CD4-positive, alpha-beta memory T cell (primary cell): ENCODE measurements at regions of chr2 and their contacts with region 1.

Region 1: GRCh38 chr2:84925724-84926376 is 20.4 kb downstream of the TMSB10 start:
- DNase-seq: peak; percentile 96 to 97 (median 97)
- H3K4me3 ChIP-seq: peak overlapping the region; percentile 73 to 86
- H3K4me3 Mint-ChIP-seq: peak overlapping the region; percentile 90 to 99 (median 95)
- H3K27ac ChIP-seq: peak overlapping the region; percentile 62
- H3K27ac Mint-ChIP-seq: peak overlapping the region; percentile 91 to 99 (median 95)
- H3K4me1 ChIP-seq: peaks cover 40% of the 10 kb centered on the region
- H3K4me1 Mint-ChIP-seq: peaks cover 25 to 48% (median 36%) of the 10 kb centered on the region in 4 donors
- H3K27me3 ChIP-seq: no peaks in the 10 kb centered on the region
- H3K27me3 Mint-ChIP-seq: no peaks in the 10 kb centered on the region

Region 2: DNA sequence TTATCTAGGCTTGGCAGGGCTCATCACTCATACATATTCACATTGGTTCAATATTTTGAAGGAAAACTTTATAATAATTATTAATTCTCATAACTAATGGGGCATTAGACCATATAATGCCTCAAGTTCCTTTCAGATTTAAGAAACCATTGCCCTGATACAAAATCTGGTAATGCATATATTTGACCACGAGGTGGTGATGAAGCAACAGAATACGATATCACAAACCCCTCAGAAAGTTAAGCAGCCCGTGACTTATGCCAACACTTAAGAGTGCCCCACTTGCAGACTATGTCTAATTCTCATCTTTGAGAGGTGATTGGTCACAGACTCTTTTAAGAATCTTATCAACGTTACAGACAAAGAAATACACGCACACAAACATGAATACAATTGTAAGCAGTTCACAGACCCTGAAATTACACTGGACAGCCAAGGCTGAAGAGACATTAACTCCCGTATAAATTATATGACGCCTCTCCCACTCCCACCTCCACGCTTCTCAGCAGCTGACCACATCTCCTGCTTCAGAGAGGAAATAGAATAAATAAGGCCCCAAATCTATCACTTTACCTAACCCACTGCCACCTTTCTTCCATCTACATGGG is 430.2 kb before region 1 on chr2:
- CTCF ChIA-PET with region 1: interaction called, 37 read pairs
- POLR2A ChIA-PET with region 1: interaction called, 6 read pairs
- intact Hi-C with region 1: loop called (anchors 1 kb)
- DNase-seq: peak; percentile 63 to 75 (median 71)
- H3K4me3 ChIP-seq: no peak overlapping the region
- H3K4me3 Mint-ChIP-seq: no peak overlapping the region
- H3K27ac ChIP-seq: no peak overlapping the region
- H3K27ac Mint-ChIP-seq: peak overlapping the region in 6 of 7 donors; percentile 39 to 84 (median 60)
- H3K4me1 ChIP-seq: peaks cover 8% of the 10 kb centered on the region
- H3K4me1 Mint-ChIP-seq: peaks cover 6 to 14% (median 7%) of the 10 kb centered on the region in 4 donors
- H3K27me3 ChIP-seq: no peaks in the 10 kb centered on the region
- H3K27me3 Mint-ChIP-seq: no peaks in the 10 kb centered on the region

Region 3: GRCh38 chr2:84781942-84782716 is 143.7 kb before region 1 on chr2:
- CTCF ChIA-PET with region 1: interaction called, 21 read pairs
- POLR2A ChIA-PET with region 1: interaction called, 13 read pairs
- intact Hi-C with region 1: loop called (anchors 2 kb)
- DNase-seq: peak; percentile 59 to 84 (median 71)
- H3K4me3 ChIP-seq: peak overlapping the region; percentile 6 to 23
- H3K4me3 Mint-ChIP-seq: peak overlapping the region; percentile 52 to 84 (median 74)
- H3K27ac ChIP-seq: peak overlapping the region; percentile 53
- H3K27ac Mint-ChIP-seq: peak overlapping the region; percentile 84 to 96 (median 93)
- H3K4me1 ChIP-seq: peaks cover 80% of the 10 kb centered on the region
- H3K4me1 Mint-ChIP-seq: peaks cover 80 to 93% (median 84%) of the 10 kb centered on the region in 4 donors
- H3K27me3 ChIP-seq: no peaks in the 10 kb centered on the region
- H3K27me3 Mint-ChIP-seq: no peaks in the 10 kb centered on the region

Region 4: GRCh38 chr2:84865181-84865783 is 60.6 kb before region 1 on chr2:
- CTCF ChIA-PET with region 1: interaction called, 64 read pairs
- POLR2A ChIA-PET with region 1: interaction called, 14 read pairs
- intact Hi-C with region 1: loop called (anchors 1 kb)
- DNase-seq: peak in 4 of 5 donors; percentile 52 to 64 (median 55)
- H3K4me3 ChIP-seq: no peak overlapping the region
- H3K4me3 Mint-ChIP-seq: peak overlapping the region; percentile 30 to 82 (median 63)
- H3K27ac ChIP-seq: no peak overlapping the region
- H3K27ac Mint-ChIP-seq: peak overlapping the region; percentile 72 to 95 (median 91)
- H3K4me1 ChIP-seq: peaks cover 80% of the 10 kb centered on the region
- H3K4me1 Mint-ChIP-seq: peaks cover 61 to 92% (median 74%) of the 10 kb centered on the region in 4 donors
- H3K27me3 ChIP-seq: no peaks in the 10 kb centered on the region
- H3K27me3 Mint-ChIP-seq: no peaks in the 10 kb centered on the region

Region 5: DNA sequence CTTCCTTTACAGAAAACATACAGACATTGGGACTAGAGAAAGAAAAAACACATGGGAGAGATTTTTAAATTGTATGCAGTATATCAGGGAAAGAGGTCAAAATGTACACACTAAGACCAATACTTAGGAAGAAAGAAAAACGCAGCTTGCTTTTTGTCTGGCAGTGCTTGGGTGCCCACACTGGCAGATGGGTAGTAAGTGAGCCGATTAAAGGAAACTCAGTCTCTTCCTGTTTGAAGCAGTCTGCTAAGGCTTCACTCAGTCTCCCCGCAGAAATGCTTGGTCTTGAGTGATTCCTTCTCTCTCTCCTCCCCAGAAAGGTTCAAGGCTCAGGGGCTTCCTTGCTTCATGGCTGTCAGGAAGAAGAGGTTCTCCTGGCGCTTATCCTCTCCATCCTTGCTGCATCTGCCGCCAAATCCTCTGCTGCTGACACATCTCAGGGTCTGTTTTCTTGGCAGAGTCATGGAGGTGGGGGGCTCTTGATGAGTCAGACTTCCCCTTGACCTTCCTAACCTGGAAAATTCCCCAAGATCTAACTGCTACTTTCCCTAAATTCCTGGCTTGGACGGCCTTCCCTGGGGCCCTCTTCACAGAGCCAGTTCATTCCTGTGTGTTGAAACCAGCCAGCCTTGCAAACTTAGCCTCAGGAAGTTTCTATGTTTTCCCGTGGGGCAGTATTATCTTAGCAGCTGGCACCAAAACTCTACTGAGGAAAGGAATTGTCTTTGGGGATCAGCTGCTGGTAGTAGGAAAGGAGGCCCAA is 30.9 kb before region 1 on chr2:
- CTCF ChIA-PET with region 1: interaction called, 271 read pairs
- POLR2A ChIA-PET with region 1: interaction called, 49 read pairs
- intact Hi-C with region 1: no loop called
- DNase-seq: peak in 2 of 5 donors; percentile 36 to 42
- H3K4me3 ChIP-seq: peak overlapping the region in 1 of 2 donors; percentile 13
- H3K4me3 Mint-ChIP-seq: peak overlapping the region; percentile 51 to 75 (median 69)
- H3K27ac ChIP-seq: peak overlapping the region; percentile 50
- H3K27ac Mint-ChIP-seq: peak overlapping the region; percentile 38 to 95 (median 91)
- H3K4me1 ChIP-seq: peaks cover 61% of the 10 kb centered on the region
- H3K4me1 Mint-ChIP-seq: peaks cover 39 to 62% (median 48%) of the 10 kb centered on the region in 4 donors
- H3K27me3 ChIP-seq: no peaks in the 10 kb centered on the region
- H3K27me3 Mint-ChIP-seq: no peaks in the 10 kb centered on the region

Region 6: DNA sequence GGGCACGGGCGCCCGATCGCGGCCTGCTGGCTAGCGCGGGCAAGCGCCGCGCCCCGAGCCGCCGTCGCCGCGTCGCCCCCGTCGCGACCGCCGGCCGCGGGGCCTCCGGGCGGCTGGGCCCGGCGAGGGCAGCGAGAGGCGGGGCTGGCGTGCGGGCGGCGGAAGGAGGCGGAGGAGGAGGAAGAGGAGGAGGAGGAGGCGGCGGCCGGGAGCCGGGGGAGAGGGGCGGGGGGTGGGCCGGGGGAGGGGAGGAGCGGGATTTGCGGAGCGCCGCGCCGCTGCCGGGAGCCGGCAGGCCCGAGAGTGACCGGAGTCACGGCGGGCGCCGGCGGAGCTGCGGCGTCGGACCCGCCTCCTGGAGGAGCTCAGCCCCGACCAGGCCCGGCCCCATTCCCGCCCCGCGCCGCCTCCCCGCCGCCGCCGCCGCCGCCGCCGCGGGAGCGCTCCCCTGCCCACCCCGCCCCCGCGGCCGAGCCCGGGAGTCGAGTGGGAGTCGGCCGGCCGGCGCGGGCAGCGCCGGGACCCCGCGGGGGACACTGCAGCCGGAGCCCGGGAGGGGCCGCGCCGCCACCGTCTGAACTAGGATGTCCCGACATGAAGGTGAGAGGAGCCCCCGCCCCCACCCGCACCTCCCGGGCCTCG is 45.1 kb after region 1 on chr2 and contains the start of gene KCMF1:
- CTCF ChIA-PET with region 1: interaction called, 25 read pairs
- POLR2A ChIA-PET with region 1: interaction called, 38 read pairs
- intact Hi-C with region 1: loop called (anchors 2 kb)
- DNase-seq: peak; percentile 64 to 79 (median 71)
- H3K4me3 ChIP-seq: peak within 1 kb of the TSS; percentile 63 to 90
- H3K4me3 Mint-ChIP-seq: peak within 1 kb of the TSS; percentile 93 to 100 (median 99)
- H3K27ac ChIP-seq: peak within 1 kb of the TSS; percentile 93
- H3K27ac Mint-ChIP-seq: peak within 1 kb of the TSS; percentile 97 to 100 (median 99)
- H3K4me1 ChIP-seq: peaks cover 59% of the 10 kb centered on the region
- H3K4me1 Mint-ChIP-seq: peaks cover 41 to 73% (median 56%) of the 10 kb centered on the region in 4 donors
- H3K27me3 ChIP-seq: no peaks in the 10 kb centered on the region
- H3K27me3 Mint-ChIP-seq: peaks cover 0 to 2% of the 10 kb centered on the region in 2 donors
- total RNA-seq, gene KCMF1: 59.8 to 62.7 TPM

Region 7: GRCh38 chr2:85032621-85033020 is 106.8 kb after region 1 on chr2:
- CTCF ChIA-PET with region 1: interaction called, 11 read pairs
- POLR2A ChIA-PET with region 1: no interaction called
- intact Hi-C with region 1: no loop called
- DNase-seq: no peak
- H3K4me3 ChIP-seq: no peak overlapping the region
- H3K4me3 Mint-ChIP-seq: no peak overlapping the region
- H3K27ac ChIP-seq: no peak overlapping the region
- H3K27ac Mint-ChIP-seq: peak overlapping the region in 2 of 7 donors; percentile 31 to 35
- H3K4me1 ChIP-seq: no peaks in the 10 kb centered on the region
- H3K4me1 Mint-ChIP-seq: peaks cover 9 to 16% (median 10%) of the 10 kb centered on the region in 4 donors
- H3K27me3 ChIP-seq: no peaks in the 10 kb centered on the region
- H3K27me3 Mint-ChIP-seq: no peaks in the 10 kb centered on the region

Region 8: GRCh38 chr2:85175369-85176299 is 249.8 kb after region 1 on chr2:
- CTCF ChIA-PET with region 1: no interaction called
- POLR2A ChIA-PET with region 1: no interaction called
- intact Hi-C with region 1: no loop called
- DNase-seq: no peak
- H3K4me3 ChIP-seq: no peak overlapping the region
- H3K4me3 Mint-ChIP-seq: no peak overlapping the region
- H3K27ac ChIP-seq: no peak overlapping the region
- H3K27ac Mint-ChIP-seq: peak overlapping the region in 1 of 7 donors; percentile 48
- H3K4me1 ChIP-seq: no peaks in the 10 kb centered on the region
- H3K4me1 Mint-ChIP-seq: peaks cover 0 to 4% (median 1%) of the 10 kb centered on the region in 4 donors
- H3K27me3 ChIP-seq: no peaks in the 10 kb centered on the region
- H3K27me3 Mint-ChIP-seq: peaks cover 2 to 8% of the 10 kb centered on the region in 2 donors

Region 9: DNA sequence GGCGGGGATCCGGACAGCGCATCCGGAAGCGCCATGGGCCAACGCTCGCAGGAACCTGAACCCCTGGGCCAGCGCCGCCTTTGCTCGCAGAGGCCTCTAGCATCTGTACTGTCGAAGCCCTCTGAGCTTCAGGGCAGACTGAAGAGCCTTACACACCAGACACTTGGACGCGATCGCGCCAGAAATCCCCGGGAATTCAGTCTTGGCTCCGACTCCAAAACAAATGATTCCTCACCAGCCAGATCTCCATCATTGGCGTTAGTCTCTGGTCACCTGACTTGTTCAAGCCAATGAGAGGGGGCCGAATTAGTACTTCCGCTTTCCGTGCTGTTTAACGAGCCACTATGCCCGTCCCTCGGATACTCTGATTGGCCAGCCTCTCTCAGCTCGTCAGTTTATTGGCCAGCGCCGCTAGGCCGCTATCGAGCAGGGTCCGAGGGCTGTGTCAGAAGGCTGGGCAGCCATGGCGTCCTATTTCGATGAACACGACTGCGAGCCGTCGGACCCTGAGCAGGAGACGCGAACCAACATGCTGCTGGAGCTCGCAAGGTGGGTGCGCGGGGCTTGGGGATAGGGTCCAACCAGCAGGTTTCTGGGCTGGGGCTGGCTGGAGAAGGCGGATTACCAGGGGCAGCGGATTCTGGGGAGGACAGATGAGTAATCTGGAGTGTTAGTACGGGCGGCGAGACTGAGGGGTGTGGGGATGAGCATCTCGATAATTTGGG is 669.6 kb after region 1 on chr2 and contains the start of gene RNF181:
- CTCF ChIA-PET with region 1: no interaction called
- POLR2A ChIA-PET with region 1: no interaction called
- intact Hi-C with region 1: no loop called
- DNase-seq: peak; percentile 88 to 97 (median 91)
- H3K4me3 ChIP-seq: peak within 1 kb of the TSS; percentile 49 to 96
- H3K4me3 Mint-ChIP-seq: peak within 1 kb of the TSS; percentile 96 to 99 (median 98)
- H3K27ac ChIP-seq: peak within 1 kb of the TSS; percentile 86
- H3K27ac Mint-ChIP-seq: peak within 1 kb of the TSS; percentile 95 to 99 (median 97)
- H3K4me1 ChIP-seq: peaks cover 26% of the 10 kb centered on the region
- H3K4me1 Mint-ChIP-seq: peaks cover 25 to 42% (median 32%) of the 10 kb centered on the region in 4 donors
- H3K27me3 ChIP-seq: no peaks in the 10 kb centered on the region
- H3K27me3 Mint-ChIP-seq: no peaks in the 10 kb centered on the region
- total RNA-seq, gene RNF181: 73.6 to 77.1 TPM